A549 (cell line): ENCODE measurements at regions of chr10 and their contacts with region 1.

Region 1: DNA sequence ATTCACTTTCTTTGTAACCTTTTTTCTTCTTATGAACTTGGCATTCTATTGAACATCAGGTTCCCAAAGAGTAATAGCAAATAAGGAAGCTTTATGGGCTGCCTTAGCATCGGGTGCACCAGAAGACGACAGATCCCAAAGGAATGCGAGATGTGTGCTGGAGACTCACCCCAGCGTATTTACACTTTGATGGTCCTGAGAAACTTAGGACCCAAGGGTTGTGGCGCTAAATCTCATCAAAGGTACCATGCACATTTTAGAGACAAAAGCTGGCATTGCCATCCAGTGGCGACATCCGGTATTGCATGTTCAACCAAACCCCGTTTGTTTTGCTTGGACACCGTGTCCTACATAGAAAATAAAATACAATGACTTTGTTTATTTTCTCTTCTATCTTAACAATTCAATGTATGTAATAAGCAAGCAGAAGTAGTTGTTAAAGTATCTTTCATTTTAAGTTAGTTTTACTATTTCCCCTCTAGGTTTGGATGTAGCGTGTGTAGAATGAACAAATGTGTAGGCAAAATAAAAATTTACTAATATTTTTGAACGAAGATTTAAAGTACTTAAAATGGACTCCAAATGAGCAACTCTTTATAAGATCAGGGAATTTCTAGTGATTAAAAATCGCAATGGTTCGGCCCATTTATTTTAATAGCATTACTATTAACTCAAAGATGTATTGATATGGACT is 1154.8 kb downstream of the GATA3 start:
- DNase-seq: peak; percentile 38 to 68
- ATAC-seq: peak; percentile 54 to 73; a peak in 4 of 6 replicates
- H3K4me3 ChIP-seq: no peak overlapping the region
- H3K27ac ChIP-seq: no peak overlapping the region
- H3K4me1 ChIP-seq: 0 out of 3 replicates have a peak, but pooled peaks cover 3% of the 10 kb centered on the region
- CTCF ChIP-seq: peak; percentile 86
- EP300 ChIP-seq: no peak
- POLR2A ChIP-seq: no peak
- RAD21 ChIP-seq: peak; percentile 89 to 90

Region 2: GRCh38 chr10:9193120-9193519 is 16.1 kb before region 1 on chr10:
- CTCF ChIA-PET with region 1: interaction called, 11 read pairs
- POLR2A ChIA-PET with region 1: no interaction called
- DNase-seq: no peak
- ATAC-seq: no peak
- H3K4me3 ChIP-seq: no peak overlapping the region
- H3K27ac ChIP-seq: no peak overlapping the region
- H3K4me1 ChIP-seq: no peaks in the 10 kb centered on the region
- CTCF ChIP-seq: no peak
- EP300 ChIP-seq: no peak
- POLR2A ChIP-seq: no peak
- RAD21 ChIP-seq: no peak

Region 3: GRCh38 chr10:9198611-9199010 is 10.6 kb before region 1 on chr10:
- CTCF ChIA-PET with region 1: interaction called, 11 read pairs
- POLR2A ChIA-PET with region 1: no interaction called
- DNase-seq: no peak
- ATAC-seq: no peak
- H3K4me3 ChIP-seq: no peak overlapping the region
- H3K27ac ChIP-seq: no peak overlapping the region
- H3K4me1 ChIP-seq: no peaks in the 10 kb centered on the region
- CTCF ChIP-seq: no peak
- EP300 ChIP-seq: no peak
- POLR2A ChIP-seq: no peak
- RAD21 ChIP-seq: no peak

Region 4: GRCh38 chr10:9362721-9363120 is 153.5 kb after region 1 on chr10:
- CTCF ChIA-PET with region 1: no interaction called
- POLR2A ChIA-PET with region 1: no interaction called
- DNase-seq: no peak
- ATAC-seq: no peak
- H3K4me3 ChIP-seq: no peak overlapping the region
- H3K27ac ChIP-seq: no peak overlapping the region
- H3K4me1 ChIP-seq: no peaks in the 10 kb centered on the region
- CTCF ChIP-seq: no peak
- EP300 ChIP-seq: no peak
- POLR2A ChIP-seq: no peak
- RAD21 ChIP-seq: no peak